ACHN (cell line): ENCODE measurements at regions of chr2 and their contacts with region 1.

Region 1: DNA sequence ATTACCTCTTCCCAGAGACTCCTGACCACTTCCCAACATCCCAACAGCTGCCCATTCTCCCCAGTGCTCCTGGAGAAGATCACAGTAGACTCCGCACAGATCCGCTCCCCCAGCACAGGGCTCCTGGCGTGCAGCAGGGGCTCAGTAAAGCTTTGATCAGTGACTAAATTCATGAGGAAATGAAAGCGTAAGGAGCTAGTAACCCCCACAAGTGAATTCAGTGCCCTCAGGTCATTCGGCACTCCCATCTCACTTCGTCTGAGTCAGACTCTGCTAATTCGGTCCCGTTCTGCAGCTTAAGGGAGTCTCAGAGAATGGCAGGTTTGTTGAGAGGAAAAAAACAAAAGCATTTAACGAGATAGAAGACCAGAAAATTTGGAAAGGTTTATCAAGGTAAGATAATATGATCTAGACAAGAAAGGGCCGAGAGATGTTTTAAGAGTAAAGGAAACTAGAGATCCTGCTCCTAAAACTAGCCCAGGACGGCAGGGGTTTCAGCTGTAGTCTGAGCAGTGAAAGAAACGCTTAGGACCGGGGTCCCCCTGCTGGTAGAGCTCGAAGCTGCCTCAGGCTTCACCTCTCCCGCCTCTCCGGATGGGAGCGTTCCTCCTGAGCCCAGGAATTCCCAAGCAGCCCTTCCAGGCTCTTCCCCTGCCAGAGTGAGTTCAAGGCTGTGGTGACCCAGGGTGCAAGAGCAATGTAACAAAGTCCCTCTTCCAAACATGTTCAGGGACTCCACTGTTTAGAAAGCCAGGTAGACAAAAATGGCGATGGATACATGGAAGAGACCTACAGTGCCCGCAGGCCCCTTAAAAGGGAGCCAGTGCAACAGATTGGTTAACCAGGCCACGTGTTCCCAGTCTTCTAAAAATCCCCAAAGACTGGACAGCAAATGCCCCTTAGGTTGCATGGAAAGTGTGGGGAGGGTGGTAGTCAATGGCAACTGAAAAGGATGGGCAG is 127.3 kb downstream of the DNER start:
- DNase-seq: peak; percentile 79

Region 2: GRCh38 chr2:229408356-229408755 is 178.7 kb before region 1 on chr2:
- in situ Hi-C with region 1: loop called (anchors 25 kb)
- DNase-seq: peak; percentile 76

Region 3: DNA sequence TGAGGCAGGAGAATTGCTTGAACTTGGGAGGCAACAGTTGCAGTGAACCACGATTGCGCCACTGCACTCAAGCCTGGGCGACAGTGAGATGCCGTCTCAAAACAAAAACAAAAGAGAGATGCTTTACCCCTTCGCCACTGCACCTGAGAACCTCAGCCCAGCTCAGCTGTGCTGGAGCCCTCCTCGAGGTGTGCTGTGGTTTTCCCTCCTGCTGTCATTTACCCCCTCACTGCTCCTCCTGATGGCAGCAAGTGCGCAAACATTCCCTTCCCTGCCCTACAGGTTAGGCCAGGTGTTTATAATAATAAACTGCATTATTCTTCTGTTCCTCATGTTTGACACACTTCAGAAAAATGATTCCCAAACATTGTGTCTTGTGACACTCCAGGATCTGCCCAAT is 343.6 kb after region 1 on chr2:
- in situ Hi-C with region 1: no loop called
- DNase-seq: no peak